ENCODE measurements at regions of chr7 and their contacts with region 1.

Region 1: GRCh38 chr7:132526111-132526740 is 50.0 kb downstream of the PLXNA4 start:
- DNase-seq: peak; percentile 71
- H3K4me3 Mint-ChIP-seq: no peak overlapping the region
- H3K27ac Mint-ChIP-seq: peak overlapping the region; percentile 29
- H3K4me1 Mint-ChIP-seq: peaks cover 25% of the 10 kb centered on the region
- H3K27me3 Mint-ChIP-seq: peaks cover 7% of the 10 kb centered on the region

Region 2: DNA sequence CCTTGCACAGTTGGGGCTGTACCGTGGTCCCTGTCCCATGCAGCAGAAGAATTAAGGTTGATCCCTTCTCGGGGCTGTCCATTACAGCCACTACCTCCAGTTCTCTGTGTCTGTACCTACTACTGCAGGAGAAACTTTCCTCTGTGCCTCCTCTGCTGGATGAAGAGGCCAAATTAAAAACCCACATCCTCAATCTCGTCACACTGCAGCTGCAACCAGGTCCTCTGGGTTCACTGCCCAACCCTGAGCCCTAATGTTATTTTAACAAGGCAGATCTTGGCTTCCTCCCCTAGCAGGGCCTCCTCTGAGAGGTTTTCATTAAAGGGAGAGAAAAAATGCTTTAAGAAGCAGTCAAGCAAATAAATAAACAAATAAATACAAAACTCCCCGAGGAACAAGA is 16.6 kb before region 1 on chr7:
- CTCF ChIA-PET with region 1: no interaction called
- POLR2A ChIA-PET with region 1: no interaction called
- intact Hi-C with region 1: no loop called
- DNase-seq: no peak
- H3K4me3 Mint-ChIP-seq: no peak overlapping the region
- H3K27ac Mint-ChIP-seq: no peak overlapping the region
- H3K4me1 Mint-ChIP-seq: peaks cover 5% of the 10 kb centered on the region
- H3K27me3 Mint-ChIP-seq: no peaks in the 10 kb centered on the region

Region 3: GRCh38 chr7:132548489-132549078 is 22.4 kb after region 1 on chr7:
- CTCF ChIA-PET with region 1: no interaction called
- POLR2A ChIA-PET with region 1: no interaction called
- intact Hi-C with region 1: loop called (anchors 2 kb)
- DNase-seq: peak; percentile 66
- H3K4me3 Mint-ChIP-seq: no peak overlapping the region
- H3K27ac Mint-ChIP-seq: no peak overlapping the region
- H3K4me1 Mint-ChIP-seq: peaks cover 3% of the 10 kb centered on the region
- H3K27me3 Mint-ChIP-seq: peaks cover 7% of the 10 kb centered on the region

Region 4: DNA sequence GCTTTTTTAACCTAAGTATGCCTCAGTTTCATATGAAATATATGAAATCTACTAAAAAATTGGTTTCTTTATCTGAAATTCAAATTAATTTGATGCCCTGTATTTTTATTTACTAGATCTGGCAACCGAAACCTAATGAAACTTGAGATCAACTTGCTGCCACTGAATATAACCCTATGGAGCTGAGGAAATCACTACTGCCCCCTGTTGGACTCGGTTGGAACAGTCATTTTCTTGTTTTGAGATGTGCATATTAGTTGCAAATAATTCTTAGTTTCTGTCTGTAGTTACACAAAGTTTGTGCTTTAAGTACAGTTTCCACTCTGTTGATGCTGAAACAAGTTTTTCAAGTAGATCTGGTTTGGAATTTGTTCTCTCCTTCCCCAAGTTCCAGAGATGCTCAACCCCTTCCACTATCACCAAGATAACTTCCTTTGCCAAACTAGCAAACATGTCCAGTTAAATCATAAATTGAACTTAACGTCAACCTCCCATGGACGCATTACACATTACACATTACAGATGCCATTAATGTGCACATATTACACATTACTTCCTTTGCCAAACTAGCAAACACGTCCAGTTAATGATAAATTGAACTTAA is 704.5 kb after region 1 on chr7:
- CTCF ChIA-PET with region 1: no interaction called
- POLR2A ChIA-PET with region 1: no interaction called
- intact Hi-C with region 1: no loop called
- DNase-seq: peak; percentile 50
- H3K4me3 Mint-ChIP-seq: no peak overlapping the region
- H3K27ac Mint-ChIP-seq: no peak overlapping the region
- H3K4me1 Mint-ChIP-seq: no peaks in the 10 kb centered on the region
- H3K27me3 Mint-ChIP-seq: peaks cover 7% of the 10 kb centered on the region

Measured in activated CD4-positive, alpha-beta memory T cell treated with anti-CD3 and anti-CD28 coated beads for 36 hours (primary cell).